ENCODE measurements at regions of chr7 and their contacts with region 1.

Region 1: GRCh38 chr7:87199700-87200450 is 19.7 kb downstream of the TMEM243 start:
- DNase-seq: no peak
- ATAC-seq: no peak
- H3K4me3 ChIP-seq: no peak overlapping the region
- H3K4me3 Mint-ChIP-seq: peak overlapping the region; percentile 5
- H3K27ac ChIP-seq: peak overlapping the region in 1 of 2 donors; percentile 77
- H3K27ac Mint-ChIP-seq: peak overlapping the region; percentile 37
- H3K4me1 ChIP-seq: peaks cover 33 to 51% of the 10 kb centered on the region in 2 donors
- H3K4me1 Mint-ChIP-seq: peaks cover 79% of the 10 kb centered on the region
- H3K27me3 ChIP-seq: no peaks in the 10 kb centered on the region
- H3K27me3 Mint-ChIP-seq: no peaks in the 10 kb centered on the region
- CTCF ChIP-seq: no peak

Region 2: DNA sequence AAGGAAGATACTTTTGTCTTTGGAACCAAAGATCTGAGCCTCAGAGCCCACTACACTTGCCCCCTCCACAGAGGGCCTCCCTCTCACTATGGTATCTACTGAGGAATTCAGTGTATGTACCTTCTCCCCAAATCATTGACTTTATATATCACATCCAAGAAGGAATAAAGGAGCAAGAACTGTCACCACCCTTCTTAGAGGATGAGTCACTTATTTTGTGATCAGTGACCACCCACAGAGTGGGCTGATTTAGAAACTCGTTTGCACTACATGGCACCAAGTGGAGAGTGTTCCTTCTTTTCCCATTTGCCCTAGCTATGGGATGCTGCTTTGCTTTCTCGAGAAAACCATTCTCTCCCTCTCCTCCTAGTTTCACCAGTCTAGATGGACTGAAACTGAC is 13.9 kb after region 1 on chr7:
- CTCF ChIA-PET with region 1: interaction called, 5 read pairs
- POLR2A ChIA-PET with region 1: interaction called, 4 read pairs
- intact Hi-C with region 1: loop called (anchors 1 kb)
- DNase-seq: no peak
- ATAC-seq: no peak
- H3K4me3 ChIP-seq: peak overlapping the region in 1 of 5 experiments; percentile 54
- H3K4me3 Mint-ChIP-seq: peak overlapping the region; percentile 74
- H3K27ac ChIP-seq: peak overlapping the region; percentile 93 to 95
- H3K27ac Mint-ChIP-seq: peak overlapping the region; percentile 72
- H3K4me1 ChIP-seq: peaks cover 96 to 98% of the 10 kb centered on the region in 2 donors
- H3K4me1 Mint-ChIP-seq: peaks cover 93% of the 10 kb centered on the region
- H3K27me3 ChIP-seq: no peaks in the 10 kb centered on the region
- H3K27me3 Mint-ChIP-seq: no peaks in the 10 kb centered on the region
- CTCF ChIP-seq: no peak